ENCODE measurements at regions of chr1 and their contacts with region 1.

Region 1: GRCh38 chr1:153494976-153495535 is 34.6 kb upstream of the S100A7 start:
- DNase-seq: no peak
- ATAC-seq: peak; percentile 83
- H3K4me3 ChIP-seq: no peak overlapping the region
- H3K27ac ChIP-seq: peak overlapping the region; percentile 25; the same call in 1 of the 2 replicates
- H3K4me1 ChIP-seq: peaks cover 13% of the 10 kb centered on the region
- H3K27me3 ChIP-seq: no peaks in the 10 kb centered on the region
- CTCF ChIP-seq: peak; percentile 94

Region 2: GRCh38 chr1:153352523-153352922 is 142.5 kb before region 1 on chr1:
- CTCF ChIA-PET with region 1: interaction called, 26 read pairs
- POLR2A ChIA-PET with region 1: no interaction called
- in situ Hi-C with region 1: loop called (anchors 10 kb)
- intact Hi-C with region 1: loop called (anchors 1 kb)
- DNase-seq: no peak
- ATAC-seq: peak; percentile 64; the same call in 1 of the 2 replicates
- H3K4me3 ChIP-seq: no peak overlapping the region
- H3K27ac ChIP-seq: no peak overlapping the region
- H3K4me1 ChIP-seq: 0 out of 2 replicates have a peak, but pooled peaks cover 3% of the 10 kb centered on the region
- H3K27me3 ChIP-seq: peaks cover 10% of the 10 kb centered on the region
- CTCF ChIP-seq: peak; percentile 93

Region 3: DNA sequence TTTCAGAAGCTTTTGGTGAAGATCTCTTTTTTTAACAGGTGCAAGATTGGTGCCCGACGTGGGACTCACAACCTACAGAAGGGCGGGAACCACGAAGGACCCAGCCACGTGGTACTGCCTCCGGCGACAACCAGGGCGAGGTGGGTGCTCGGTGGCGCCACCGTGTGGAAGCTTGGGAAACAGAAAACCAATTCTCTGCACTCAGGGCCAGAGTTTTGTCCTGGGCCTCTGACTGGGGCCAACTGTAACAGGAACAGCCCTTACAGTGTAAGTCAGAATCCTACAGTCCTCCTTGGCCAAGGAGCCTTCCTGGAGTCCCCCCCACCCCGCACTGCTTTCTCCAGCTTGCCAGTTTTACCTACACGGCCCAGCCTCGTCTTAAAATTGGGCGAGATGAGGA is 90.3 kb before region 1 on chr1:
- CTCF ChIA-PET with region 1: interaction called, 4 read pairs
- POLR2A ChIA-PET with region 1: no interaction called
- in situ Hi-C with region 1: no loop called
- intact Hi-C with region 1: loop called (anchors 10 kb)
- DNase-seq: peak; percentile 8
- ATAC-seq: peak; percentile 74; the same call in 1 of the 2 replicates
- H3K4me3 ChIP-seq: no peak overlapping the region
- H3K27ac ChIP-seq: no peak overlapping the region
- H3K4me1 ChIP-seq: no peaks in the 10 kb centered on the region
- H3K27me3 ChIP-seq: peaks cover 20% of the 10 kb centered on the region
- CTCF ChIP-seq: peak; percentile 84

Measured in Panc1 (cell line).